IMR-90 (cell line): ENCODE measurements at regions of chr13 and their contacts with region 1.

Region 1: DNA sequence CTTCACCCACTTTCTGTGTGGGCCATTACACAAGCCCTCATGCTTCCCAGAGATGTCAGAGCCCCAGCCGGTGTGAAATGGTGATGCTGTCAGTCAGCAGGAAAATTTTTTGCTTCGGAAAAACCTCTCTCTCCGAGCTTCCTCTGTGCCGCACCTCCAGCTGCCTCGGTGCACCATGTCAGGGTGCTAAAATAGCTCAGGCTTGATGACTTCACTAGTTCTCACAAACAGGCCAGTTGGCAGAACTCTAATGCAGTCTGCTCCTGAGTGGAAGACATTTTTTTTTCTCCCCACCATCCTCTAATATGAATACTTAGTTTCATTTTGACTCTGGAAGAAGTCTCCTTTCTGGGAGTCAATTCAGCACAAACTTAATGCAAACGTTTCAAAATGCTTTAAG is 71.3 kb downstream of the KLF12 start:
- DNase-seq: peak; percentile 74
- ATAC-seq: peak; percentile 53
- H3K4me3 ChIP-seq: peak overlapping the region; percentile 31
- H3K27ac ChIP-seq: peak overlapping the region; percentile 41
- H3K4me1 ChIP-seq: peaks cover 12% of the 10 kb centered on the region
- H3K27me3 ChIP-seq: no peaks in the 10 kb centered on the region
- CTCF ChIP-seq: no peak
- POLR2A ChIP-seq: no peak
- RAD21 ChIP-seq: no peak

Region 2: DNA sequence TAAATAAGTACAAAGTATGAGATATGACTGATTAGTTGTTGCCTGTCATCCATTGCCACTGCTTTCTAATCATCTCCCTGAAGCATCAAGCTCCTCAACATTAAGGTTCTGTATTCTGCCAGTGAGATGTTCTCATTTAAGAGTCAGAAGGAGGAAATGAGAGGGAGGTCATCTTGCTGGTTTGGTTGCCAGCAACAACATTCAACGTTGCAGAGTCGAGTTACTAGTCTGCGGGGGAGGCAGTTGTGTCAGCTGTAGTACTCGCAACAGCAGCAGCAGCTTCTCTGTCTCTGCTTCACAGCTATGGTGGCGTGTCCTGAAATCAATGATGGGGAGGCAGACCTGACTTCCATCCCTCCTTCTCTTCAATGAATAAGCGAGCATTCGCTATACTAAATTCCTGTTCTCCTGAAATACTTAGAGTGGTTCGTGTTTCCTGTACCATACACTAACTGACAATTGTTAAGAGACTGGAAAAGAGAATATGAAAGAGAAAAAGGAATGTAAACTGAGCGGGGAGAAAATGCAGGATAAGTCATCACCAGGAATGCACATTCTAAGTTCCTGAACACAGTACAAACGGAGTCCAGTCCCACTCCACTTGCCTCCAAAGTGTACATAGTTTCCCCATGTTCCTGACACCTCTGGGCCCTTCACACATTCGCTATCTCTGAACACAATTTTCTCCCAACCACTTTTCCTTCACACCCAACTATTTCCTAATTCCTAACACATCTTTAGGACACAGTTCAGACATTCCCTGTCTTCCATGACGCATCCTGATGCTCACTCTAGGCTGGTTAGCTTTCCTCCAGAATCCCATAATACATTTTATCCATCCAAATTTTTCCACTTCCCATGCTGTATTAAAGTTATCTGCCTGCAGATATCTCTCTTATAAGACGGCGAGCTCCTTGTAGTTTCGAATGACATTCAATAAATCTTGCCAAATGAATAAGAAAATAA is 191.7 kb before region 1 on chr13:
- CTCF ChIA-PET with region 1: no interaction called
- POLR2A ChIA-PET with region 1: no interaction called
- dilution Hi-C with region 1: no loop called
- in situ Hi-C with region 1: no loop called
- intact Hi-C with region 1: no loop called
- DNase-seq: peak; percentile 96
- ATAC-seq: peak; percentile 92
- H3K4me3 ChIP-seq: peak overlapping the region; percentile 50
- H3K27ac ChIP-seq: peak overlapping the region; percentile 94
- H3K4me1 ChIP-seq: peaks cover 11% of the 10 kb centered on the region
- H3K27me3 ChIP-seq: no peaks in the 10 kb centered on the region
- CTCF ChIP-seq: no peak
- POLR2A ChIP-seq: no peak; the same call in 1 of the 2 replicates
- RAD21 ChIP-seq: no peak

Region 3: GRCh38 chr13:74047939-74048600 is 14.9 kb before region 1 on chr13:
- CTCF ChIA-PET with region 1: no interaction called
- POLR2A ChIA-PET with region 1: no interaction called
- dilution Hi-C with region 1: no loop called
- in situ Hi-C with region 1: no loop called
- intact Hi-C with region 1: loop called (anchors 2 kb)
- DNase-seq: no peak
- ATAC-seq: peak; percentile 71
- H3K4me3 ChIP-seq: no peak overlapping the region
- H3K27ac ChIP-seq: no peak overlapping the region
- H3K4me1 ChIP-seq: peaks cover 12% of the 10 kb centered on the region
- H3K27me3 ChIP-seq: no peaks in the 10 kb centered on the region
- CTCF ChIP-seq: no peak
- POLR2A ChIP-seq: no peak
- RAD21 ChIP-seq: no peak